ENCODE measurements at regions of chr2 and their contacts with region 1.

Region 1: DNA sequence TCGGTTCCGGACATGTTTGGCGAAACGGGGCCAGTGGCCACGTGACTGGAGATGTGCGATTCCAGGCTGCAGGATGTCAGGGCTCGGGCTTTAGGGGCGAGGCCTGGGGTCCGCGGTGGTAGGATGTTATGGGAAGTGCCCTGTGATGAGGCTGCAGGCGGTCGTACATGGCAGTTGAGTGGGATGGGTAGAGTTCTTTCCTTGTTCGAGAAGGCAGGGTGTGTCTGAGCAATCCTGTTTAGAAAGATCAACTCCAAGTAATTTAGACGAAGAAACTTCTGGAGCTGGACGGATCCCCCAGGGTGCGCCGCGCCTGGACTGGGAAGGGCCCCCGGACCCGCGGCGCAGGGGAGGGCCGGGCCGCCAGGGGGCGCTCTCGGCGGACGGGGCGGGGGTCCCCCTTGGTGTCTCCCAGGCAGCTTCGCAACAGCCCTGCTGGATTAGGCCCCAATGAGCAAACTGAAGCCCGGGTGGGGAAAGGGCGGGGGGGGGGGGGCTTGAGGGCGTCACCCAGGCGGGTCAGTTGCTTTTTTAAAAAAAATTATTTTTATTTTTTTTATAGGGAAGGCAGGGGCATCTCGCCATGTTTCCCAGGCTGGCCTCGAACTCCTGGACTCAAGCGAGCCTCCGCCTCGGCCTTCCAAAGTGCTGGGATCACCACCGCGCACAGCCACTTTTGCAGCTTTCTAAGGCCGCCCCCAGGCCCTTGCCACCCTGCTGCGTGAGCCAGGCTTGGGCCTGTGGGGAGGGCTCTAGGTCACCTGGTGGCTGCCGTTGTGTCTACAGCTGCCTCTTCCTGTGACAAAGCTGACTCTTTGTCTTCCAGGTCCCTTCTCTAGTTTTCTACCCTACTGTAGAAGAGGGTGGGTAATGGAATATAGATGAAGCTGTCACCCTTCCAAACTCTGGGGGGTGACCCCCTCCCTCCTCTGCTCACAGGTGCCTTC is 17.4 kb upstream of the SDC1 start:
- DNase-seq: peak; percentile 63 to 93 (median 92)
- ATAC-seq: peak; percentile 96
- H3K4me3 ChIP-seq: no peak overlapping the region
- H3K27ac ChIP-seq: no peak overlapping the region
- H3K4me1 ChIP-seq: peaks cover 3 to 9% of the 10 kb centered on the region in 2 experiments; a peak in 3 of 5 replicates
- H3K27me3 ChIP-seq: peaks cover 0 to 6% of the 10 kb centered on the region in 2 experiments; a peak in 1 of 5 replicates
- CTCF ChIP-seq: peak; percentile 66 to 83 (median 76)
- EP300 ChIP-seq: no peak
- POLR2A ChIP-seq: no peak
- RAD21 ChIP-seq: peak in 1 of 2 experiments; percentile 43; a peak in 2 of 4 replicates

Region 2: GRCh38 chr2:20282916-20283592 is 40.7 kb after region 1 on chr2:
- CTCF ChIA-PET with region 1: no interaction called
- POLR2A ChIA-PET with region 1: no interaction called
- in situ Hi-C with region 1: no loop called
- intact Hi-C with region 1: no loop called
- DNase-seq: no peak
- ATAC-seq: no peak
- H3K4me3 ChIP-seq: no peak overlapping the region
- H3K27ac ChIP-seq: no peak overlapping the region
- H3K4me1 ChIP-seq: no peaks in the 10 kb centered on the region
- H3K27me3 ChIP-seq: no peaks in the 10 kb centered on the region
- CTCF ChIP-seq: no peak
- EP300 ChIP-seq: no peak
- POLR2A ChIP-seq: no peak
- RAD21 ChIP-seq: no peak

Region 3: GRCh38 chr2:20424300-20425290 is 182.3 kb after region 1 on chr2:
- CTCF ChIA-PET with region 1: no interaction called
- POLR2A ChIA-PET with region 1: no interaction called
- in situ Hi-C with region 1: no loop called
- intact Hi-C with region 1: loop called (anchors 5 kb)
- DNase-seq: peak in 2 of 4 experiments; percentile 41 to 57
- ATAC-seq: peak; percentile 76
- H3K4me3 ChIP-seq: no peak overlapping the region
- H3K27ac ChIP-seq: 0 out of 3 replicates have a peak overlapping the region, but pooled peaks have one; percentile 25
- H3K4me1 ChIP-seq: peaks cover 6 to 14% of the 10 kb centered on the region in 2 experiments
- H3K27me3 ChIP-seq: peaks cover 0 to 18% of the 10 kb centered on the region in 2 experiments; a peak in 2 of 5 replicates
- CTCF ChIP-seq: no peak
- EP300 ChIP-seq: peak; percentile 66
- POLR2A ChIP-seq: no peak
- RAD21 ChIP-seq: peak in 1 of 2 experiments; percentile 16; a peak in 1 of 4 replicates

Measured in K562 (cell line).